ENCODE measurements at regions of chr7 and their contacts with region 1.

Region 1: DNA sequence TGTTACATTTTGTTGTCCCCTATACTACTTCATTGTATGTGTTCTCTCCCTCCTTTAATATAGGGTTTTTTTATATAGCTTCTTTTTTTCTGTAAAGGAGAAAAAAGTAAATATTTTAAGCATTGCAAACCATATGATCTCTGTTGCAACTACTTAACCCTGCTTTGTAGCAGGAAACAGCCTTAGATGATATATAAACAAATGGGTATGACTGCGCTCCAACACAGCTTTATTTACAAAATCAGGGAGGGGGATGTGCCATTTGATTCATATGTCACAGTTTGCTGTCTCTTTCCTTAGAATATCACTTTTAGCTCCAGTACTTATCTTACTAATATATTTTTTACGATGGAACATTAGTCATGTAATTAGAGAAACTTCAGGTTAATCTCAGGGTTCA is 155.2 kb upstream of the GNAI1 start:
- DNase-seq: no peak
- ATAC-seq: no peak
- H3K4me3 ChIP-seq: no peak overlapping the region
- H3K27ac ChIP-seq: no peak overlapping the region
- H3K4me1 ChIP-seq: no peaks in the 10 kb centered on the region
- H3K27me3 ChIP-seq: no peaks in the 10 kb centered on the region
- CTCF ChIP-seq: no peak
- POLR2A ChIP-seq: no peak

Region 2: DNA sequence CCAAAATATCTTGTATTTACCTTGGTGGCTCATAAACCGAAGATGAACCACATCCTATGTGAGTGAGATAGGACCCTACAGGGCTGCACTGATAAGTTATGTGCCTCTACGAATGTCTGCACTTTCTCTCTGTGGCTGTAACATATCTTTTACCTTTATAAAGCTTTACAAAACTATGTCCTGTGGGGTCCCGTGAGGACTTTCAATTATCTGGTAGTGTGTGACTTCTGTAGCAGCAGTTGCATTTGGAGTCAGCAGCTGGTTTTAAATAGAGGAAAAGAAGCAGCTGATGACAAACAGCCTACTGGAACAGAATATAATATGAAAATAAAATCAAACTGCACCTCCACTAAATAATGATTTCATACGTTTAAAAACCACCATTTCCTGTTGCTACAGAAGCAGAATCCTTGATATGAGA is 67.2 kb before region 1 on chr7:
- intact Hi-C with region 1: loop called in 1 of 10 experiments (anchors 10 kb)
- DNase-seq: no peak
- ATAC-seq: no peak
- H3K4me3 ChIP-seq: no peak overlapping the region
- H3K27ac ChIP-seq: no peak overlapping the region
- H3K4me1 ChIP-seq: no peaks in the 10 kb centered on the region
- H3K27me3 ChIP-seq: no peaks in the 10 kb centered on the region
- CTCF ChIP-seq: no peak
- POLR2A ChIP-seq: no peak

Region 3: DNA sequence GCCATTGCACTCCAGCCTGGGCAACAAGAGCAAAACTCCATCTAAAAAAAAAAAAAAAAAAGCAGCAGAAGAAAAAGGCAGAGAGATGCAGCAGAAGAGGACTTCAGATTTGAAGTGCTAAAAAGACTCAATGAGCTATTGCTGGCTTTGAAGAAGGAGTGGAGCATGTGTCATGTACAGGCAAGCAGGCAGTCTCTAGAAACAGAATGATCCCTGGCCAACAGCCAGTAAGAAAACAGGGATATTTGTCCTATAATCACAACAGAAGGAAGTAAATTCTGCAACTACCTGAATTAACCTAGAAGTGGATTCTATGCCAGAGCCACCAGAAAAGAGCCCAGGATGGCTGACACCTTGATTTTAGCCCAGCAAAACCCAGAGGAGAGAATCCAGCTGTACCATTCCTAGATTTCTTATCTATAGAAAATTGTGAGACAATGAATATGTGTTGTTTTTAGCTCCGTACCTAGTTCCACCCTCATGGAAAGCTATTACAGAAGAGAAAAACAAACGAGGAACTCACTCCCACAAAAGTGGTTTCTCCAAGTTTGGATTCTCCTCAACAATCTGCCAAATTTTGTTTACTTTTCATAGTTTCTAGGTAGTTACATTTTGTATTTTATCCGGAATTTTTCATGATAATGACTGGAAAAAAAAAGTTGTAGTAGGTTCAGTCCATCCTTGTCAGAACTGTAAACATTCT is 43.0 kb before region 1 on chr7:
- intact Hi-C with region 1: no loop called
- DNase-seq: no peak
- ATAC-seq: no peak
- H3K4me3 ChIP-seq: no peak overlapping the region
- H3K27ac ChIP-seq: no peak overlapping the region
- H3K4me1 ChIP-seq: no peaks in the 10 kb centered on the region
- H3K27me3 ChIP-seq: peaks cover 0 to 5% (median 0%) of the 10 kb centered on the region in 9 donors
- CTCF ChIP-seq: no peak
- POLR2A ChIP-seq: no peak

Measured in heart left ventricle (tissue), 16 donors.